Heart right ventricle (tissue), 16 donors: ENCODE measurements at regions of chr1 and their contacts with region 1.

Region 1: DNA sequence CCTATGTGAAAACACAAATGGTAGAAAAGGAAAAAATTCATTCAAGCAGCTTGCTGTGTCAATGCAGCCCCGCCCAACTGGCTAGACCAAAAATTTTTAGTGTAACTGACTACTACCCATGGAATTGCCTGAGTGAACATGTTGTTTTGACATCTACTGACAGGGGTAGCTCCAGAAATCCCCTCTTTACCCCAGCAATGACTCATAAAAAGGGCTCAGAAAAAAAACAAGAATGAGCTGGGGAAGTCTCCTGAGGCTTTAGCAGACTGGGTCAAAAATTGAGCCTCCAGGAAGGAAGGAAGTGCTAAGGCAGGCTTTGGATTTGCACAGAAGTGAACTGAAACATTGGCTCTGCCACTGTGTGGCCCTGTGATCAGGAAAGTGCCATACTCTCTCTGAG is 24.4 kb upstream of the FGGY start:
- DNase-seq: no peak
- ATAC-seq: peak in 5 of 8 donors; percentile 14 to 67 (median 34)
- H3K4me3 ChIP-seq: no peak overlapping the region
- H3K27ac ChIP-seq: peak overlapping the region in 3 of 10 donors; percentile 7 to 59 (median 12)
- H3K4me1 ChIP-seq: peaks cover 0 to 33% (median 11%) of the 10 kb centered on the region in 9 donors
- H3K27me3 ChIP-seq: no peaks in the 10 kb centered on the region
- CTCF ChIP-seq: no peak

Region 2: GRCh38 chr1:59186656-59187055 is 85.9 kb before region 1 on chr1:
- intact Hi-C with region 1: loop called in 1 of 10 experiments (anchors 10 kb)
- DNase-seq: no peak
- ATAC-seq: peak in 5 of 8 donors; percentile 63 to 85 (median 75)
- H3K4me3 ChIP-seq: no peak overlapping the region
- H3K27ac ChIP-seq: no peak overlapping the region
- H3K4me1 ChIP-seq: peaks cover 0 to 5% (median 0%) of the 10 kb centered on the region in 9 donors
- H3K27me3 ChIP-seq: no peaks in the 10 kb centered on the region
- CTCF ChIP-seq: peak in 1 of 9 donors; percentile 14

Region 3: DNA sequence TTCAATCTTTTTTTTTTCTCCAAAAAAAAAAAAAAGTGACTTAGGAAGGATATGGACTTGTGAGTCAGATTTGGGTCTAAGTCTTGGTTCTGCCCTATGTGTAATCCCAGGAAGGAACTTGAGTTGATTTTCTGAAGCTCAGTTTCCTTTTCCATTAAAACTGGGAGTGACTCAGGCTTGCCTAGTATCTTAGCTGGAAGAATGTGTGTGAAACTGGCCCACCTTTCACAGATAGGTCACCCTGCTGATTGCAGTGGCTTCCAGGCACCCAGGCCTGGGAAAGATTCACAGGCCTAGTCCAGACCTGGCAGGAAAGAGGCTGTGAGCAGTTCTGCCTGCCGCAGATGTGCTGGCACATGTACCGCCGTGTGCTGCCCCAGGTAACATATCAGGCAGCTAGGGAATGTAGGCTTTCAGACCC is 323.9 kb after region 1 on chr1:
- intact Hi-C with region 1: no loop called
- DNase-seq: peak in 1 of 2 donors; percentile 33
- ATAC-seq: peak in 7 of 8 donors; percentile 34 to 80 (median 77)
- H3K4me3 ChIP-seq: no peak overlapping the region
- H3K27ac ChIP-seq: peak overlapping the region in 7 of 10 donors; percentile 5 to 66 (median 37)
- H3K4me1 ChIP-seq: peaks cover 0 to 17% (median 13%) of the 10 kb centered on the region in 9 donors
- H3K27me3 ChIP-seq: no peaks in the 10 kb centered on the region
- CTCF ChIP-seq: no peak